ENCODE measurements at regions of chr19 and their contacts with region 1.

Region 1: GRCh38 chr19:9796113-9796773 is 22.6 kb downstream of the FBXL12 start:
- DNase-seq: peak; percentile 95
- ATAC-seq: peak; percentile 31
- H3K4me3 Mint-ChIP-seq: no peak overlapping the region
- H3K27ac Mint-ChIP-seq: peak overlapping the region; percentile 68
- H3K4me1 Mint-ChIP-seq: peaks cover 23% of the 10 kb centered on the region
- H3K27me3 Mint-ChIP-seq: no peaks in the 10 kb centered on the region
- CTCF ChIP-seq: peak; percentile 71

Region 2: GRCh38 chr19:9584073-9584833 is 212.0 kb before region 1 on chr19 and contains the start of gene ZNF121:
- CTCF ChIA-PET with region 1: interaction called, 5 read pairs
- POLR2A ChIA-PET with region 1: no interaction called
- intact Hi-C with region 1: loop called (anchors 5 kb)
- DNase-seq: peak; percentile 91
- ATAC-seq: peak; percentile 87
- H3K4me3 Mint-ChIP-seq: peak within 1 kb of the TSS; percentile 92
- H3K27ac Mint-ChIP-seq: peak within 1 kb of the TSS; percentile 97
- H3K4me1 Mint-ChIP-seq: peaks cover 31% of the 10 kb centered on the region
- H3K27me3 Mint-ChIP-seq: peaks cover 5% of the 10 kb centered on the region
- CTCF ChIP-seq: no peak
- total RNA-seq, gene ZNF121: 79.9 to 85.5 TPM

Region 3: DNA sequence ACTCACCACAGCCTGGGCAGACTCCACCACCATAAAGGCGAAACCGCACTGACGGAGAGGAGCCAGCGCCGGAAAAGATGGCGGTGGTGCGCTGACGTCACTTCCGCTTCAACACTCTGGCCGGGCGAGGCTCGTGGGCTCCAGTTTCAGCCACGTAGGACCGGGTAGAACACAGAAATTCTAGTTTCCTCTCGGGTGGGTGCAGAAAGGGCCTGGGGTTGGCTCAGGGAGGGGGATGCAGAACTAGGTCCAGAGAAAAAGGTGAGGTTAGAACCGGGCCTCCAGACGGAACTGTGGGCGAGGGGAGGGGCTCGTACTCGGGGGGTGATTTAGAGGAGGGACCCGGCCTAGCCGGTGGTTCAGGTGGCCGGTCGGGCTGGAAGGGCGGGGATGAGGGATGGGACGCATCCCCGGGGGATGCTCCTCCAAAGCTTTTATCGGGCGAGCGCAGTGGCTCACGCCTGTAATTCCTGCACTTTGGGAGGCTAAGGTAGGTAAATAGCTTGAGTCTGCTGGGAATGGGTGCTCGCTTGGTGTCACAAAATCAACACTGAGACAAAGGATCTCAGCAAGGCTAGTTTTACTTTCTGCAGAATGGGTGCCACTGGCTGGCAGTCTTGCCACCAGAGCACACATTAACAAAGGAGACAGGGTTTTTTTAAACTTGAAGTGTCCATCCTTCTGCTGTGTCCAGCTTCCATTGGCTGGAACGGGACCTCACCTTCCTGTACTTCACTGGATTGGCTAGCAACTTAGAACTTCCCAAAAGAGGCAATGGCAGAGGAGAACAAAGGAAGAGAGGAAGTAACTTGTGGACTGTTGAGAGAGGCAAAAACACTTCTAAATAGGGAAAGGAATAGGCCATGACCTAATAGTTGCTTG is 174.8 kb before region 1 on chr19 and contains the start of gene ZNF561:
- CTCF ChIA-PET with region 1: interaction called, 9 read pairs
- POLR2A ChIA-PET with region 1: interaction called, 4 read pairs
- intact Hi-C with region 1: loop called (anchors 2 kb)
- DNase-seq: peak; percentile 92
- ATAC-seq: peak; percentile 86
- H3K4me3 Mint-ChIP-seq: peak within 1 kb of the TSS; percentile 98
- H3K27ac Mint-ChIP-seq: peak within 1 kb of the TSS; percentile 99
- H3K4me1 Mint-ChIP-seq: peaks cover 18% of the 10 kb centered on the region
- H3K27me3 Mint-ChIP-seq: no peaks in the 10 kb centered on the region
- CTCF ChIP-seq: no peak
- total RNA-seq, gene ZNF561: 23.1 to 24.2 TPM

Region 4: DNA sequence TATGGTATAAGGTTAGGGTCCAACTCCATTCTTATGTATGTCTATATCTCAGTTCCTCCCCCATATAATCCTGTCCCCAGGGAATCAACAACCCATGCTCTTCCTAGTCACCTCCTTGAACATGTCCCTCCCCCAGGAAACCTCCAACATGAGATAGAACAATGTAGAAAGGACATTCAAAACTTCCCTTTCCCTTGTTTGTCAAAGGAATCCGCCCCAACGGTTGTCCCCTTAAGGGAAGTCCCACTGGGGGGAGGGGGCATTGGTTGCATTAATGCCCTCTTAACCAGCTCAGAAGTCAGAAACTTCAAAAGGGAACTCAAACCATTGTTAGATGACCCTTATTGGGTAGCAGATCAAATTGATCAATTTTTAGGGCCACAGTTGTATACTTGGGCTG is 168.4 kb before region 1 on chr19:
- CTCF ChIA-PET with region 1: interaction called, 12 read pairs
- POLR2A ChIA-PET with region 1: interaction called, 4 read pairs
- intact Hi-C with region 1: loop called (anchors 2 kb)
- DNase-seq: no peak
- ATAC-seq: no peak
- H3K4me3 Mint-ChIP-seq: no peak overlapping the region
- H3K27ac Mint-ChIP-seq: no peak overlapping the region
- H3K4me1 Mint-ChIP-seq: peaks cover 6% of the 10 kb centered on the region
- H3K27me3 Mint-ChIP-seq: no peaks in the 10 kb centered on the region
- CTCF ChIP-seq: no peak

Region 5: GRCh38 chr19:9818734-9819589 is 22.7 kb after region 1 on chr19 and contains the start of gene FBXL12:
- CTCF ChIA-PET with region 1: no interaction called
- POLR2A ChIA-PET with region 1: interaction called, 3 read pairs
- intact Hi-C with region 1: loop called (anchors 1 kb)
- DNase-seq: peak; percentile 100
- ATAC-seq: peak; percentile 90
- H3K4me3 Mint-ChIP-seq: peak within 1 kb of the TSS; percentile 92
- H3K27ac Mint-ChIP-seq: peak within 1 kb of the TSS; percentile 95
- H3K4me1 Mint-ChIP-seq: peaks cover 24% of the 10 kb centered on the region
- H3K27me3 Mint-ChIP-seq: no peaks in the 10 kb centered on the region
- CTCF ChIP-seq: no peak
- total RNA-seq, gene FBXL12: 24.2 to 26.7 TPM

Region 6: GRCh38 chr19:9847087-9847671 is 50.9 kb after region 1 on chr19:
- CTCF ChIA-PET with region 1: no interaction called
- POLR2A ChIA-PET with region 1: no interaction called
- intact Hi-C with region 1: no loop called
- DNase-seq: peak; percentile 82
- ATAC-seq: peak; percentile 92
- H3K4me3 Mint-ChIP-seq: no peak overlapping the region
- H3K27ac Mint-ChIP-seq: peak overlapping the region; percentile 63
- H3K4me1 Mint-ChIP-seq: peaks cover 27% of the 10 kb centered on the region
- H3K27me3 Mint-ChIP-seq: no peaks in the 10 kb centered on the region
- CTCF ChIP-seq: no peak